B cell (primary cell): ENCODE measurements at regions of chr11 and their contacts with region 1.

Region 1: DNA sequence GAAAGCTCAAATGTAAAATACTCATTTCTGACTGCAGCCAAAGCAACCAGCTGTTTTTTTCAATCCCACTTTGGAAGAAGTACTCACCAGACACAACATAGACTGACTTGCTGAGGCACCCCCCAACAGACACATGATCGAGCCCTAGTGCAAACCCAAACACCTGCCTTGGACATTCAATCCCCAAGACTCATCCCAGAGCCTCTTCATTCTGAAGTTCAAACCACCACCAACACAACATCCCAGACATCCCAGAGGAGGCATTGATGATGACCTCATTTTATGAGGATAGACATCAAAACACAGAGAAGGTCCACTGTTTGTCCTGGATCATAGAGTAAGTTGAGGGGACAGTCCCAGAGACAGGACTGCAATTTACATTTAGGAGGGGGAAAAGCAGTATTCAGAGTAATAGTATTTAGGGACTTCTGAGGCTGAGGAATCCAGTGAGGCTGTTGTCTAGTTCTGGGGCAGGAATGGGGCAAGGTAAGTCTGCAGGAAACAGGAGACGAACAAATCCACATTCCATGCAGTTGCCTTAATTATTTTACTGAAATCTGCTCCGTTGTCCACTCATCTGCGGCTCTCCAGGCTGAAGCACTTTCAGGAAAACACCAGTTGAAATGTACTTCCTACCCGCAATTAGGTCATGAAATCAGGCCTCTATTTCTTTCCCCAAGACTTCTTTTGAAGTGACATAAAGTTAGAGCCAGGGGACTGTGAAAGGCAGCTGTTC is 54.8 kb downstream of the CLPB start:
- DNase-seq: no peak
- ATAC-seq: no peak
- H3K4me3 ChIP-seq: no peak overlapping the region
- H3K4me3 Mint-ChIP-seq: no peak overlapping the region
- H3K27ac ChIP-seq: no peak overlapping the region
- H3K27ac Mint-ChIP-seq: no peak overlapping the region
- H3K4me1 ChIP-seq: no peaks in the 10 kb centered on the region
- H3K4me1 Mint-ChIP-seq: no peaks in the 10 kb centered on the region
- H3K27me3 ChIP-seq: no peaks in the 10 kb centered on the region
- H3K27me3 Mint-ChIP-seq: no peaks in the 10 kb centered on the region
- CTCF ChIP-seq: no peak

Region 2: GRCh38 chr11:72553706-72554105 is 174.1 kb after region 1 on chr11:
- CTCF ChIA-PET with region 1: no interaction called
- POLR2A ChIA-PET with region 1: interaction called, 10 read pairs
- intact Hi-C with region 1: no loop called
- DNase-seq: no peak
- ATAC-seq: no peak
- H3K4me3 ChIP-seq: no peak overlapping the region
- H3K4me3 Mint-ChIP-seq: no peak overlapping the region
- H3K27ac ChIP-seq: no peak overlapping the region
- H3K27ac Mint-ChIP-seq: no peak overlapping the region
- H3K4me1 ChIP-seq: no peaks in the 10 kb centered on the region
- H3K4me1 Mint-ChIP-seq: no peaks in the 10 kb centered on the region
- H3K27me3 ChIP-seq: peaks cover 0 to 22% (median 2%) of the 10 kb centered on the region in 4 experiments
- H3K27me3 Mint-ChIP-seq: peaks cover 58% of the 10 kb centered on the region
- CTCF ChIP-seq: no peak